Right cardiac atrium (tissue), 5 donors: ENCODE measurements at regions of chr7 and their contacts with region 1.

Region 1: GRCh38 chr7:123748734-123749536 is at the start of gene WASL:
- DNase-seq: peak; percentile 92 to 97 (median 96)
- ATAC-seq: peak; percentile 97
- H3K4me3 ChIP-seq: peak within 1 kb of the TSS; percentile 75
- H3K27ac ChIP-seq: peak within 1 kb of the TSS; percentile 99
- H3K4me1 ChIP-seq: no peaks in the 10 kb centered on the region
- H3K27me3 ChIP-seq: no peaks in the 10 kb centered on the region
- total RNA-seq, gene WASL: 24.7 to 32.5 (median 28.6) TPM

Region 2: GRCh38 chr7:123692471-123692877 is 56.5 kb before region 1 on chr7:
- intact Hi-C with region 1: loop called in 1 of 4 experiments (anchors 10 kb)
- DNase-seq: peak in 2 of 3 donors; percentile 38 to 41
- ATAC-seq: peak in 1 of 2 donors; percentile 25
- H3K4me3 ChIP-seq: no peak overlapping the region
- H3K27ac ChIP-seq: no peak overlapping the region
- H3K4me1 ChIP-seq: no peaks in the 10 kb centered on the region
- H3K27me3 ChIP-seq: no peaks in the 10 kb centered on the region

Region 3: DNA sequence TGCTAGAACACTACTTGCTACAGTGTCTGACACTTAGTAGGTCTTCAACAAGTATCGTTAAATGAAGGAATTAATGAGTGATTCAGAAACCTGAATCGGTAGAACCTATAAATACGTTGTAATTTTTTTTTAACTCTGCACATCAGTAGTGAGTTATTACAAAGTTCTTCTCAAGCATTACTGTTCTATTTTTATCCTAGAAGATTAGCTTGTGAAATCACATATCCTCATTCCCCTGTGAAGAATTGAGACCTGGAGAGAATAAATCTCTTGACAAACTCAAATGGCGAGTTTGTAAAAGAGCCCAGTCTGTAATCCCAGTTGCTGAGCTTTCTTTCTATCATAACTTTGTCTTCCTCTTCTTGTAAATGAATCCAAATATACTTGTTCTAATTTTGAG is 130.7 kb after region 1 on chr7:
- intact Hi-C with region 1: no loop called
- DNase-seq: no peak
- ATAC-seq: no peak
- H3K4me3 ChIP-seq: no peak overlapping the region
- H3K27ac ChIP-seq: no peak overlapping the region
- H3K4me1 ChIP-seq: peaks cover 2% of the 10 kb centered on the region
- H3K27me3 ChIP-seq: no peaks in the 10 kb centered on the region